ENCODE measurements at regions of chr10 and their contacts with region 1.

Region 1: GRCh38 chr10:88091490-88092105 is 228.2 kb downstream of the PTEN start:
- DNase-seq: peak; percentile 28 to 93 (median 52)
- ATAC-seq: peak; percentile 96
- H3K4me3 ChIP-seq: no peak overlapping the region
- H3K4me3 Mint-ChIP-seq: peak overlapping the region; percentile 28
- H3K27ac ChIP-seq: peak overlapping the region; percentile 17 to 72
- H3K27ac Mint-ChIP-seq: peak overlapping the region; percentile 73
- H3K4me1 ChIP-seq: peaks cover 32% of the 10 kb centered on the region
- H3K4me1 Mint-ChIP-seq: peaks cover 51% of the 10 kb centered on the region
- H3K27me3 ChIP-seq: no peaks in the 10 kb centered on the region
- H3K27me3 Mint-ChIP-seq: no peaks in the 10 kb centered on the region
- CTCF ChIP-seq: no peak

Region 2: DNA sequence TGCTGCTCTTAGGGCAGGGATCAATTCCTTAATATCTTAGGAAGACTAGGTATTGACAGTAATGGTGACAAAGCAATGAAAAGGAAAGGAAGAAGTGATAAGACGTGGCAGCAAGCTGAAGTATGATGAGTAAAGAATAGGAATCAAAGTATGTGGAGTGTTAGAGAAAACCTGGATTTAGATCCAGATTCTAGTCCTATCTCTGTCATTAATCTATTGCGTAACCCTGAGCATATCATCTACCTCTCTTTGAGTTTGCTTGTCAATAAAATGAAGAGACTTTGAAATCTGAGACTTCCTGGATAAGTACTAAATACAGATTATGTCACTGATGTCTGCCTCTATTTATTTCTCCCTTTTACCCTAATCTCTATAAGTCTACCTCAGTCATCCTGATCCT is 139.0 kb before region 1 on chr10:
- CTCF ChIA-PET with region 1: no interaction called
- POLR2A ChIA-PET with region 1: no interaction called
- intact Hi-C with region 1: loop called in 1 of 2 experiments (anchors 10 kb)
- DNase-seq: no peak
- ATAC-seq: no peak
- H3K4me3 ChIP-seq: no peak overlapping the region
- H3K4me3 Mint-ChIP-seq: no peak overlapping the region
- H3K27ac ChIP-seq: no peak overlapping the region
- H3K27ac Mint-ChIP-seq: peak overlapping the region; percentile 1
- H3K4me1 ChIP-seq: no peaks in the 10 kb centered on the region
- H3K4me1 Mint-ChIP-seq: peaks cover 30% of the 10 kb centered on the region
- H3K27me3 ChIP-seq: no peaks in the 10 kb centered on the region
- H3K27me3 Mint-ChIP-seq: no peaks in the 10 kb centered on the region
- CTCF ChIP-seq: no peak